AG04449 (cell line): ENCODE measurements at regions of chr7 and their contacts with region 1.

Region 1: DNA sequence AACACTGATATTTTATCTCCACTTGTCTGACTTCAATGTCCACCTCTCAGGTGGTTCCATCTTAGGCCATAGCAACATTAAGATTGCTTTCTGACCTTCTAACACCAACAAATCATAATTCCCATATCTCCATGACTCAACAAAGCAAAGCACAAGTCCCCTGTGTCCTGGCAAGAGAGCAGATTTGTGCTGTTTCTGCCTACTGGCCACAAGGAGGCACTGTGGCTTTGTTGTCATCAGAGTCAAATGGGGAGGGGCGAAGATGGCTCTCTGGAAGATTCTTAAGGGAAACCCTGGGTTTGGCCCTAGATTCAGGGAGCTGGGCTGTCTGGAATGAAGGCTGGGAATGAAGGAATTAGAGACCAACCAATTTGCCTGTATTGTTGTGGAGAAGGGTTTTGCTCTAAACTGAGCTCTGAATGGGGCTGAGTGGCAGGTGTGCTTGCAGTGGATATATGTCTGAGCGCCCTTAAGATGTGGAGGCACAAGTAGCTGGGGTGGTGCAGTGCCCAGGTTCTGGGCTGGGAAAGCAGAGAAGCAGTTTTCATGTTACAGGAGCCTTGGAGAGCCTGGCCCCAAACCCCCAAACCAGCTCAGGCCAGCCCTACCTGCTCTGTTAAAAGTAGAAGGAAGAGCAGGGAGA is 154.8 kb upstream of the PRSS58 start:
- DNase-seq: peak; percentile 16
- H3K4me3 ChIP-seq: no peak overlapping the region
- CTCF ChIP-seq: peak; percentile 84

Region 2: DNA sequence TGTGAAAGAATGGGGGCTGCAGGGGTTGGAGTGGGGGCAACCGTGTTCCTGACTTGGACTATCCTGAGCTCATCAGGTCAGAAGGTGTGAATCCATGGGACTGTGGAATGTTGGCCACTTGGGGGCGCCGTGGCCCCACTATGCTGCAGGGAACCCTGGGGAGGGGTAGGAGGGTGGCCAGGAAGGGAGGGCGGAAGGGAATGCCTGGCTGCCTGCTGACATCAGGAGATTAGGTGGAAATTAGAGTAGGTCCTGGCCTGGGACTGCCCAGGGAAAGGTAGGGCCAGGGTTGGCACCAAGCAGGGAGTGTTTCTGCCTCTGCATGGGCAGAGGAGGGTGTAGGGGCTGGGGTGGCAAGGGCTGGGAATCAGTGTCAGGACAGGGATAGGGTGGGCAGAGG is 89.0 kb before region 1 on chr7:
- CTCF ChIA-PET with region 1: no interaction called
- POLR2A ChIA-PET with region 1: no interaction called
- DNase-seq: no peak
- H3K4me3 ChIP-seq: no peak overlapping the region
- CTCF ChIP-seq: peak; percentile 23

Region 3: GRCh38 chr7:142391191-142391992 is 21.3 kb before region 1 on chr7:
- CTCF ChIA-PET with region 1: interaction called, 45 read pairs
- POLR2A ChIA-PET with region 1: no interaction called
- DNase-seq: no peak
- H3K4me3 ChIP-seq: no peak overlapping the region
- CTCF ChIP-seq: peak; percentile 49

Region 4: GRCh38 chr7:142400042-142400533 is 12.6 kb before region 1 on chr7:
- CTCF ChIA-PET with region 1: interaction called, 13 read pairs
- POLR2A ChIA-PET with region 1: no interaction called
- DNase-seq: no peak
- H3K4me3 ChIP-seq: no peak overlapping the region
- CTCF ChIP-seq: no peak